Right cardiac atrium (tissue), 5 donors: ENCODE measurements at regions of chr3 and their contacts with region 1.

Region 1: DNA sequence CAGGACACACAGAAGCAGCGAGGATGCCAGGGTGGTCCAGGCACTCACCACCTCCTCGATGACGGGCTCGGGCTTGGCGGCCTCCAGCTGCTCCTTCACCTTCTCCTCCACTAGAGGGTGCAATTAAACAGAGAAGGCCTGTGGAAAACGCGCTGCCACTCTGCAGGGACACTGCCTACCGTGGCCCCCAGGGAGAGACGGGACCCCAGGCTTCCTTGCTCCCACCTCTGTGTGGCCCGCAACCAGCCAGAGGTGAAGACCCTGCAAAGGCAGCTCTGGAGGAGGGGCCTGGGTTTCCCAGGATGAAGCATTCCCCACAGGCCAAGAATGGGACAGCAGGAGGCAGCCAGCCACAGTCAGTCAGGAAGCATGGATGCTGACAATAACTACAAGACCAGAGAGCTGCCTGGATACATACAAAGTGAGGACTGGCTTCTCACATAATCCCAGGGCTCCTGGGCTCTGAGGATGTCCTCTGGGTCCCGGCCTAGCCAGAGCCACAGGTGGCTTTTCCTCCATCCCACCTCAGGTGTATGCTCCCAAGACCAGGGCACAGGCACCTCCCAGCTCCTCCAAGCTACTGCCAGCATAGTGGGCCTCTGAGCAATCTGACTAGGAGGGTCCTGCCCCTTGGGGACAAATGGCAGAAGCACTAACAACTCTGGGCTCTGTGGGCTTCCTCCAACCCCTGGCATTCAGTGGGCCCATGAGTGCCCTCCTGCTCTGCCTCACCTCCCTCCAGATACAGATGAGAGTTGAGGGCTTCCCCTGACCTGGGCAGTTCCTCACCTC is 46.2 kb downstream of the PTH1R start:
- DNase-seq: peak in 1 of 3 donors; percentile 69
- ATAC-seq: peak; percentile 8 to 29
- H3K4me3 ChIP-seq: no peak overlapping the region
- H3K27ac ChIP-seq: no peak overlapping the region
- H3K4me1 ChIP-seq: peaks cover 9% of the 10 kb centered on the region
- H3K27me3 ChIP-seq: no peaks in the 10 kb centered on the region

Region 2: GRCh38 chr3:46976326-46977190 is 52.8 kb after region 1 on chr3 and contains the start of gene CCDC12:
- intact Hi-C with region 1: loop called in 1 of 4 experiments (anchors 5 kb)
- DNase-seq: peak; percentile 95 to 97 (median 96)
- ATAC-seq: peak; percentile 91 to 92
- H3K4me3 ChIP-seq: peak within 1 kb of the TSS; percentile 79
- H3K27ac ChIP-seq: peak within 1 kb of the TSS; percentile 97
- H3K4me1 ChIP-seq: peaks cover 6% of the 10 kb centered on the region
- H3K27me3 ChIP-seq: no peaks in the 10 kb centered on the region
- total RNA-seq, gene CCDC12: 31.2 to 37.7 (median 34.2) TPM

Region 3: DNA sequence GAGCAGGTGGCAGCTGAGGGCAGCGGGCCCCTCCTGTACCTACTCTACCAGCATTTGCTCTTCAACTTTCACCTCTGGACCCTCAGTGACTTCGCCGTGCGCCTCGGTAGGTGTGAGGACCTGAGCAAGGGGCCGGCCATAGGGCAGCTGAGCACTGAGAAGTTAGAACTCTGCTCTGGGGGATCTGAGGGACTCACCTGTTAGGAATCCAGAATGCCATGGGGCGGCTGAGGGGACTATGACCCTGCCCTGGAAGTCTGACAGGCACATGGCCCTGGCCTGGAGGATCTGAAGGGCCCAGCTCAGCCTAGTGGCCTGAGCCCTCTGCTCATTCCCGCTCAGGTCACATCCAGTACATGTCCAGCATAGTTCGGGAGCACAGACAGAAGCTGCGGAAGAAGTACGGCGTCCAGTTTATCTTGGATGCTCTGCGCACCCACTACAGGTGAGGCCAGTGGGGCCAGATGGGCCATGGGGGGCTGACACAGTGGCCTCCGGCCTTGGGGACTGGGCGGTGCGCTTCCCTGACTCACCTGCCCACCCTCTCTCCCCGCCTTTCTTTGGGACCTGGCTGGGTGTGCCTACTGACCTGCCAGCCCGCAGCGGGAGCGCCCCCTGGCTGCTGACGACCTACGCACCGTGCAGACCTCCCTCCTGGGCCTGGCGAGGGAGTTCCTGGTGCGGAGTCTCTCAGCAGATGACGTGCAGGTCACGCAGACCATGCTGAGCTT is 74.5 kb after region 1 on chr3:
- intact Hi-C with region 1: loop called in 3 of 4 experiments (anchors 5 kb)
- DNase-seq: peak; percentile 68 to 91 (median 89)
- ATAC-seq: peak; percentile 59 to 61
- H3K4me3 ChIP-seq: no peak overlapping the region
- H3K27ac ChIP-seq: no peak overlapping the region
- H3K4me1 ChIP-seq: no peaks in the 10 kb centered on the region
- H3K27me3 ChIP-seq: no peaks in the 10 kb centered on the region

Region 4: GRCh38 chr3:47035634-47036033 is 111.9 kb after region 1 on chr3:
- intact Hi-C with region 1: no loop called
- DNase-seq: no peak
- ATAC-seq: no peak
- H3K4me3 ChIP-seq: no peak overlapping the region
- H3K27ac ChIP-seq: no peak overlapping the region
- H3K4me1 ChIP-seq: peaks cover 3% of the 10 kb centered on the region
- H3K27me3 ChIP-seq: no peaks in the 10 kb centered on the region

Region 5: GRCh38 chr3:47243419-47244147 is 319.8 kb after region 1 on chr3:
- intact Hi-C with region 1: no loop called
- DNase-seq: no peak
- ATAC-seq: peak in 1 of 2 donors; percentile 32
- H3K4me3 ChIP-seq: no peak overlapping the region
- H3K27ac ChIP-seq: no peak overlapping the region
- H3K4me1 ChIP-seq: no peaks in the 10 kb centered on the region
- H3K27me3 ChIP-seq: no peaks in the 10 kb centered on the region